Dendritic cell treated with granulocyte-macrophage colony-stimulating factor and Interleukin-4, amounts not matched to agents 40 ng/mL and 50 ng/mL, for 4 days (primary cell): ENCODE measurements at regions of chr1 and their contacts with region 1.

Region 1: GRCh38 chr1:19762175-19762779 is 37.4 kb downstream of the TMCO4 start:
- H3K4me3 Mint-ChIP-seq: no peak overlapping the region
- H3K27ac Mint-ChIP-seq: no peak overlapping the region
- H3K4me1 Mint-ChIP-seq: peaks cover 6% of the 10 kb centered on the region
- H3K27me3 Mint-ChIP-seq: no peaks in the 10 kb centered on the region

Region 2: DNA sequence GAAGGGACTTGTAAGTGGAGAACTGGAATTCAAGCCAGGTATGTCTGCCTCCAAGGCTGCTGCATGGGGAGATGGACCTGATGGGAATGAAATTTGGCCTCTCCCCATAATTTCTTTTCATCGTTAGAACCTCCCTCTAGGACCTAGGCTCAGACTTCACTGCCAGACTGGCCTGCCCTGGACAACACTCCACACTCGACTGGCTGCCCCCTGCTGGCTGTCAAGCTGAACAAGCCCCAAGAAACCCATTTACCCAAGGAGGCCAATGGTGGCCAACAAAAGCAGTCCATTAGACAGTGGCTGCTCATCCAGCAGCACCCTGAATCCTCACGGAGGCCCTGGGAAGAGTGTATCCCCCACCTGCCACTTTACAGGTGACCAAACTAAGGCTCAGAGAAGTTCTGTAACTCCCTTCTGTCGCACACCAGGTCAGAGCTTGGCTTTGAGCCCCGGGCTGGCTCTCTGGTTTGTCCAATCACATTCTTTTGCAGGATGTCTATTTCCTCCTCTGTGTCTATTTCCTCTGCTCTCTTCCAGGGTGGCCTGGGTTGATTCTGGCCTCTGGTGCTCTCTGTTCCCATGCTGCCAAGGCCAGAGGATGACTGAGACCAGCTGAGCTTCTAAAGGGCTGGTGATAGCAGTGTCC is 49.1 kb after region 1 on chr1:
- intact Hi-C with region 1: loop called (anchors 1 kb)
- H3K4me3 Mint-ChIP-seq: no peak overlapping the region
- H3K27ac Mint-ChIP-seq: no peak overlapping the region
- H3K4me1 Mint-ChIP-seq: no peaks in the 10 kb centered on the region
- H3K27me3 Mint-ChIP-seq: peaks cover 11% of the 10 kb centered on the region

Region 3: GRCh38 chr1:20555025-20555757 is 792.9 kb after region 1 on chr1:
- intact Hi-C with region 1: no loop called
- H3K4me3 Mint-ChIP-seq: no peak overlapping the region
- H3K27ac Mint-ChIP-seq: no peak overlapping the region
- H3K4me1 Mint-ChIP-seq: no peaks in the 10 kb centered on the region
- H3K27me3 Mint-ChIP-seq: peaks cover 52% of the 10 kb centered on the region